Activated naive CD4-positive, alpha-beta T cell treated with anti-CD3 and anti-CD28 coated beads for 36 hours (primary cell): ENCODE measurements at regions of chr14 and their contacts with region 1.

Region 1: GRCh38 chr14:74302634-74303577 is at the start of gene ABCD4:
- DNase-seq: peak; percentile 92
- H3K4me3 Mint-ChIP-seq: peak within 1 kb of the TSS; percentile 97
- H3K27ac Mint-ChIP-seq: peak within 1 kb of the TSS; percentile 92
- H3K4me1 Mint-ChIP-seq: peaks cover 26% of the 10 kb centered on the region
- H3K27me3 Mint-ChIP-seq: no peaks in the 10 kb centered on the region
- total RNA-seq, gene ABCD4: 41.4 to 43.9 TPM

Region 2: DNA sequence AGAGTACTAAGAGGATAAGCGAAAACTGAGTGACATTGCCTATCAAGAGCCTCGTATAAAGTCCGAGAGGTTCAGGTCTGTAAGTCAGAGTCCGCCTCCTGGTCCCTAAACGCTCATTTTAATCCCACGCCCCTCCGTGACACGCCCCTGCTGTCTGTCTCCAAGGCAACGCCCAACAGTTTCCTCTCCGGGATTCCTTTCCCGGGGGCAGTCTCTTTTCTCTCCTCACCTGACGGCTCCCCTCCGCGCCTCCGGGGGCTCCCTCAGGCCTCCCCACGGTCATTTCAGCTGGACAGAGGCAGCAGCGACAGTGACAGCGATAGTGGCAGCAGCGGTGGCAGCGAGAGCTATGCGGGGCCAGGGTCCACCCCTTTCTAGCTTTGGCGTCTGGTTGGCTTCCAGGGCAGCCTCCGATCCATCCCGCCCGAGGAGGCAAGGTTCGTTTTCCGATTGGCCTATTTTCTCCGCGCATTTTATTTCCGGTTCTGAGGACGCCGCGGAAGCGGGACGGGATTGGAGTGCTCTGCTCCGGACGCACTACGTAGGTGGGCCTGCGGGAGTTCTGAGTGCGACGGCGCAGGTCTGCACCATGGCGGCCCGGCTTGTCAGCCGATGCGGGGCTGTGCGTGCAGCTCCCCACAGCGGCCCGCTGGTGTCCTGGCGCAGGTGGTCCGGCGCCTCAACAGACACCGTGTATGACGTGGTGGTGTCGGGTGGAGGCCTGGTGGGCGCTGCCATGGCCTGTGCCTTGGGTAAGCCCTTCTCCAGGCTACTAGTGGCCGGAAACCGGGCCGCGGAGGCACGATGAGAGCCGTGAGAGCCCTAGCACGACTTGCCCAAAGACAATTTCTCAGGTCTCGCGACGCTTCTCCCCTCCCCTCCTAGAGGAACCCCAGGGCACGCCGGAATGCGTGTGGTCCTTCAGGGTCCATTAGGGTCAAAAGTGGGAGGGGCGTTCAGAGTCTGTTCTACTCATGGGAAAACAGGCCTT is 352.9 kb before region 1 on chr14 and contains the starts of genes COQ6 and FAM161B:
- CTCF ChIA-PET with region 1: no interaction called
- intact Hi-C with region 1: no loop called
- DNase-seq: peak; percentile 95
- H3K4me3 Mint-ChIP-seq: peak within 1 kb of the TSS; percentile 98
- H3K27ac Mint-ChIP-seq: peak within 1 kb of the TSS; percentile 90
- H3K4me1 Mint-ChIP-seq: peaks cover 21% of the 10 kb centered on the region
- H3K27me3 Mint-ChIP-seq: no peaks in the 10 kb centered on the region
- total RNA-seq, gene COQ6: 17.6 to 17.7 TPM
- total RNA-seq, gene FAM161B: 1.5 to 1.6 TPM

Region 3: DNA sequence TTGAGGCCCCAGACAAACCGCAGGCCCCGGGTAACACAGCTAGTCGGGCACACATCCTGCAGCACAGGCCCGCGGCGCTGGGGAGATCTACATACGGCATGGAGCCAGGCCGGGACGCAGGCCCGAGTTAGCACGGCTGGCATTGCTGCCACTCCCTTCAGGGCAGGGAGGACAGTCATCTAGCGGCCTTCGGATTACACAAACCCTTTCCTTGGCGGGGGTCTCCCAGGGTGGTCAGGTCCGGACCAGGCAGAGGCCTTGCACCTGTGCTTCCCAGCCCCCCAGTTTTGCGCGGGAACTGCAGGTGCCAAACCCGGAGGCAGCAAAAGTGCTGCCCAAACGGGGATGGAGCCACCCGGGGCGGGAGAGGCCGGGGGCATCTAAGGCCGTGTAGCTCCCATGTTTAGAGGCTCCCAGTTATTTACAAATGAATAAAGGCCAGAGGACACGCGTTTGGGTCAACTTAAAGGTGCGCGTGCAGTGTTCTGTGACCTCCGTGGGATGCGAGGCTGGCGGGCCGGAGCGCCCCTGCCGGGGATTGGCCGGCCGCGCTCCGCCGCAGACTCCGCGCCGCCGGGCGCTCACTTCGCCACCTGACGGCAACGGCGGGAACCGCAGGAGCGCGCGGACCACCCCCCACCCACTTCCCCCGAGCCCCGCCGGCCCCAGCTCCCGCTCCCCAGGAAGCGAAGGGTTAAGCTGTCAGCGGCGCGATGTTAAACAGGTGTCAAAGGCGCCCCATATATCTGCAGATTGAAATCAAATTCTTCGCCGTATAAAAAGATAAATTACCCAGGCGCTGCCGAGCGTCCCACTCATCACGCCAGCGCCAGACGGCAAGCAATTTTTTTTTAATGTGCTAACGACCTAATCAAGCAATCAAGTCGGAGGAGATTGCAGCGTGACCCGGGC is 45.6 kb before region 1 on chr14:
- CTCF ChIA-PET with region 1: interaction called, 5 read pairs
- intact Hi-C with region 1: loop called (anchors 1 kb)
- DNase-seq: peak; percentile 63
- H3K4me3 Mint-ChIP-seq: peak overlapping the region; percentile 72
- H3K27ac Mint-ChIP-seq: no peak overlapping the region
- H3K4me1 Mint-ChIP-seq: peaks cover 7% of the 10 kb centered on the region
- H3K27me3 Mint-ChIP-seq: no peaks in the 10 kb centered on the region